ENCODE measurements at regions of chr5 and their contacts with region 1.

Region 1: DNA sequence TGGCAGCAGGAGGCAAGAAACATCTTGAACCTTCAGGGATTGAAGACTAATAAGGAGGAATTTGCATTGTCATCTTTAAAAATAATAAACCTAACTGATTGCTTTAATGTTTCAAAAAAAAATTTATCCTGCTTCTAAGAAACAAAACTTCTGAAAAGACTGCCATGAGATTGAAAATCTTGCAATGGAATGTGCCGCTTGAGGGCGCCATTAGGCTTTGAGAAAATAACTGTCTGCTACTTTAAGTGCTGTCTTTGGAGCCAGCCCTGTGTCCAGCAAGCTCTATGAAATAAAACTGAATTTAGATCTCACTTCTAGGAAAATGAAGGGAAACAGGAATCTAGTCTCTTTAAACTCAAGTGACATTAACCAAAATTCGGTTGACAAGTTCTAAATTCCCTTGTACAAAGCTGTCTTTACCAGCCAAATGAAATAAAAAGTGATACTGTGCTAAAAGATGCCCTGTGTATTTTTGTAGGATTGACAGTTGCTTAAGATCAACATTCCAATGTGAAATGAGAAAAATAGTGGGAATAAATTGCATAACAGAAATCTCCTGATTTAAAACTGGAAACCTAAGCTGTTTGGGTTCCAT is 79.4 kb downstream of the ESM1 start:
- DNase-seq: peak; percentile 50
- H3K4me3 Mint-ChIP-seq: no peak overlapping the region
- H3K27ac Mint-ChIP-seq: no peak overlapping the region
- H3K4me1 Mint-ChIP-seq: peaks cover 55% of the 10 kb centered on the region
- H3K27me3 Mint-ChIP-seq: peaks cover 37% of the 10 kb centered on the region

Region 2: GRCh38 chr5:53726121-53726520 is 1179.9 kb before region 1 on chr5:
- intact Hi-C with region 1: no loop called
- DNase-seq: no peak
- H3K4me3 Mint-ChIP-seq: no peak overlapping the region
- H3K27ac Mint-ChIP-seq: no peak overlapping the region
- H3K4me1 Mint-ChIP-seq: peaks cover 4% of the 10 kb centered on the region
- H3K27me3 Mint-ChIP-seq: no peaks in the 10 kb centered on the region

Region 3: DNA sequence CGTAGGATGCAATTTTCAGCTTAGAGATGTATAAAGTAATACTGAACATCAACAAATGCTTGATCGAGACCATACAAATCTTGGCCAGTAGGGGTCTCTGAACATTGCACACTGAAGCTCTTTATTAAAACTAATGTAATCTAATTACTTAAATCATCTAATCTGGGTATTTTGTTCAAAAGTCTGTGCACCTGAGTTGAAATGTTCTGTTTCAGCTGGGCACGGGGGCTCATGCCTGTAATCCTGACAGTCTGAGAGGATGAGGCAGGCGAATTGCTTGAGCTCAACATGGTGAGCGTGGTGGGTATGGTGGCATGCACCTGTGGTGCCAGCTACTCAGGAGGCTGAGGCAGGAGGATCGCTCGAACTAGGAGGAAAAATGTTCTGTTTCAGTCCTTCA is 38.3 kb after region 1 on chr5:
- intact Hi-C with region 1: loop called (anchors 1 kb)
- DNase-seq: peak; percentile 13
- H3K4me3 Mint-ChIP-seq: no peak overlapping the region
- H3K27ac Mint-ChIP-seq: no peak overlapping the region
- H3K4me1 Mint-ChIP-seq: peaks cover 22% of the 10 kb centered on the region
- H3K27me3 Mint-ChIP-seq: peaks cover 9% of the 10 kb centered on the region

Region 4: GRCh38 chr5:55062039-55062779 is 156.2 kb after region 1 on chr5:
- intact Hi-C with region 1: loop called (anchors 1 kb)
- DNase-seq: peak; percentile 79
- H3K4me3 Mint-ChIP-seq: peak overlapping the region; percentile 79
- H3K27ac Mint-ChIP-seq: peak overlapping the region; percentile 98
- H3K4me1 Mint-ChIP-seq: peaks cover 83% of the 10 kb centered on the region
- H3K27me3 Mint-ChIP-seq: peaks cover 1% of the 10 kb centered on the region

Region 5: DNA sequence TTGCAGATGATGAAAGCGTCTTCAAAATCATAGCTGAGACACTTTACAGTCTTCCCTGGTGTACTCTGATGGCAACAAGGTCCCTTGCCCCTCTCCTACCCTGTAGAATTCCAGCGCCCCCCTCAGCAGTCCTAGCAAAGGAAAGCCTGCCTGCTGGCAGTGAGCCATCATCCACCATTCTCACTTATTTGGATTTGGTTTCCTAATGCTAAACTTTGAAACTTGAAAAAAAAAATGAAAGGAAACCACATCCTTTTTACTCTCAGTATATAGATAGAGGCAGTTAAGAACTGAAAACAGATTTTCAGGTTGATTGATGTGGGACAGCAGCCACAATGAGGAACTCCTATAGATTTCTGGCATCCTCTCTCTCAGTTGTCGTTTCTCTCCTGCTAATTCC is 196.3 kb after region 1 on chr5 and contains the start of gene GZMA:
- intact Hi-C with region 1: loop called (anchors 1 kb)
- DNase-seq: peak; percentile 36
- H3K4me3 Mint-ChIP-seq: peak within 1 kb of the TSS; percentile 85
- H3K27ac Mint-ChIP-seq: peak within 1 kb of the TSS; percentile 93
- H3K4me1 Mint-ChIP-seq: peaks cover 87% of the 10 kb centered on the region
- H3K27me3 Mint-ChIP-seq: no peaks in the 10 kb centered on the region
- total RNA-seq, gene GZMA: 88.1 and 93.7 TPM in 2 replicates

Region 6: DNA sequence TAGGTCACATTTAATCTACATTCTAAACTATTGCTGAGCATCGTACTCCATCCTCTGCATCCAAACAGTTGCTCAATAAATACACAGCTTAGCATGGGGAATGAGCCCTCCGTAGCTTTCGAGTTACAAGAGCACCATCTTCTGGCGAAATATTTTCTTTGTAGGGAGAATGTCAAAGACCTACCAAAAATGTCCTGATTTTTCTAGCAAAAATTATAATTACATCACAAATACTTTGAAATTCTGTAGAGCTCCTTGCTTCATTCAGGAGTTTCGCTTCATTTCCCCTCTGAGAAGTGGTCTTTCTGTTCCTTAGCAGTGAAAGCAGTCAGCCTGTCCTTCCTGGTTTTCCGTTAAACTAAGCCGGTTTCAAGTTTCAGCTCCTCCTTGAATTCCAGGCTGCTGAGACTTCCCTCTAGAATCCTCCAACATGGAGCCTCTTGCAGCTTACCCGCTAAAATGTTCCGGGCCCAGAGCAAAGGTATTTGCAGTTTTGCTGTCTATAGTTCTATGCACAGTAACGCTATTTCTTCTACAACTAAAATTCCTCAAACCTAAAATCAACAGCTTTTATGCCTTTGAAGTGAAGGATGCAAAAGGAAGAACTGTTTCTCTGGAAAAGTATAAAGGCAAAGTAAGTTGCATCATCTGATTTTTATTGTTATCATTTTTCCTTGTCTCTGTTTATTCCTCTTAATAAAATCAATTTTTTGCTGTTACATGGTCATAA is 253.9 kb after region 1 on chr5 and contains the start of gene GPX8:
- intact Hi-C with region 1: loop called (anchors 1 kb)
- DNase-seq: no peak
- H3K4me3 Mint-ChIP-seq: no peak within 1 kb of the TSS
- H3K27ac Mint-ChIP-seq: no peak within 1 kb of the TSS
- H3K4me1 Mint-ChIP-seq: peaks cover 8% of the 10 kb centered on the region
- H3K27me3 Mint-ChIP-seq: peaks cover 64% of the 10 kb centered on the region
- total RNA-seq, gene GPX8: not detected in 2 replicates

Measured in activated T-helper 1 cell treated with anti-CD3 and anti-CD28 coated beads, Interleukin-12 subunit alpha, Interleukin-12 subunit beta, Interleukin-2, Interleukin-4 antibody, amounts not matched to agents 30 ng/mL and 10 ng/mL and 1 ng/mL, durations not matched to agents 14 hours and 24 hours and 36 hours (primary cell).